Gastrocnemius medialis (tissue), 4 donors: ENCODE measurements at regions of chr15 and their contacts with region 1.

Region 1: DNA sequence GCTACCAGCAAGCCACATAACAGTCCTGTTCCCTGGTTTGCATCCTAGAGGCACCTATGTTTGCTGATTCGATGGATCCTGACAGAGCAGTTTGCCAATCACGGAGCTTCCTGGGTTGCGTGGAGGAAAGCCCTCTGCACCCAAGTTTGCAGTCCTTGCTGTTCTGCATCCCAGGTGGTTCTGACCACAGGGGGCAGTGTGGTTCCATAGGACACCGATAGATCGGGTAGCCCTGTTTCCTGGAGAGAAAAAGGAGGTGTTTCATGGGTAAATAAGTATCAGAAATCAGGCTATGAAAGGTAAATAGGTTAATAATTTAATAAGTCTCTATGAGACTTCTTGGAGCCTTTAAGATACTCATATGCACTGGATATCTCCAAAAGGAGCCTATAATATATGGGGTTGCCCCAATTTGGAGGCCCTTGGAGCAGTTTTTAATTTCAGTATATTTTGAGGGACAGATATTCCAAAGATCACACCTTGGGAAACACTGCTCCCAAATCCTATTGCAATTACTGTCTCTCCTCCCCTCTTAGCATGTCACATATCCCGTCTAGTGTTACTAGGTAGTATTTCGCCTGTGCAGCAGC is 194.6 kb upstream of the TPM1 start:
- DNase-seq: peak in 1 of 2 donors; percentile 44
- ATAC-seq: peak; percentile 66 to 77
- H3K4me3 ChIP-seq: no peak overlapping the region
- H3K27ac ChIP-seq: no peak overlapping the region
- H3K4me1 ChIP-seq: peaks cover 9 to 13% of the 10 kb centered on the region in 2 donors
- H3K27me3 ChIP-seq: no peaks in the 10 kb centered on the region
- CTCF ChIP-seq: peak; percentile 49 to 91 (median 83)
- POLR2A ChIP-seq: no peak

Region 2: DNA sequence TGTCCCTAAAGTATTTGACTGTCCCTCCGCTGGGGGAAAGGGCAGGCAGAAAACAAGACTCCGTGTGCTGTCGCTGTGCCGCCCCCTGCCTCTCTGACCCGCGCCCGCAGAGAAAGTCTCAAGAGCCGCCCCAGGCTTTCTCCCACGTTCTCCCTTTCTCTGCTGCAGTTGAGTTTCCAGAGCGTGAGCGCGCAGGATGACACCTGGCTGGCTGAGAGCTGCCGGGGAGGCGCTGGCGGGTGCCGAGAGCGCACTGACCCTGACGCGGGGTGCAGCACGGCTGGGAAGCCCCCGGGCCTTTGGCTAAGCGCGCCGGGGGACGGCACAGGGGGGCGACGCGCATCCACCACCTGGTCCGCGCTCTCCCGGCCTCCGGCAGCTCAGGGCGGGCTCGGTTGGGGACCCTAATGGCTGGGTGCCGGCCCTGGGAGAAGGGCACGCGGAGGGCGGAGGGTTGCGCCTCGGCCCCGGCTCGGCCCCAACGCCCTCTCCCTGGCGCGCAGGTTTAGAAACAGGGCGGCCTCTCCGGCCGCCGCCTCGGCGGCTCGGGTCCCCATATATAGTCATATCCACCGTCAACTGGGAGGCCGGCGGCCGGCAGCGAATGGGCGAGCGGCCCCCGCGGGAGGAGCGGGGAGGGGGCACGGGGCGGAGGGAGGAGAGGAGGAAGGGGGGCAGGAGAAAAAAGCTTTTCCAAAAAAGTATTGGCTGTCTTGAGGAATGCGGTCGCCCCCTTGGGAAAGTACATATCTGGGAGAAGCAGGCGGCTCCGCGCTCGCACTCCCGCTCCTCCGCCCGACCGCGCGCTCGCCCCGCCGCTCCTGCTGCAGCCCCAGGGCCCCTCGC is 194.2 kb after region 1 on chr15 and contains the start of gene TPM1:
- in situ Hi-C with region 1: no loop called
- intact Hi-C with region 1: loop called (anchors 2 kb)
- DNase-seq: peak; percentile 63 to 83
- ATAC-seq: peak; percentile 70 to 71
- H3K4me3 ChIP-seq: peak within 1 kb of the TSS; percentile 71 to 93 (median 83)
- H3K27ac ChIP-seq: peak within 1 kb of the TSS; percentile 86 to 96 (median 91)
- H3K4me1 ChIP-seq: peaks cover 29 to 37% of the 10 kb centered on the region in 2 donors
- H3K27me3 ChIP-seq: peaks cover 0 to 28% (median 6%) of the 10 kb centered on the region in 3 donors
- CTCF ChIP-seq: peak in 1 of 5 experiments; percentile 24
- POLR2A ChIP-seq: peak; percentile 71 to 76
- total RNA-seq, gene TPM1: 656 to 1,383 (median 909) TPM

Region 3: GRCh38 chr15:63048115-63048775 is 200.2 kb after region 1 on chr15:
- in situ Hi-C with region 1: no loop called
- intact Hi-C with region 1: loop called (anchors 2 kb)
- DNase-seq: peak; percentile 78 to 86
- ATAC-seq: peak; percentile 75 to 78
- H3K4me3 ChIP-seq: peak overlapping the region; percentile 72 to 94 (median 80)
- H3K27ac ChIP-seq: peak overlapping the region; percentile 86 to 96 (median 91)
- H3K4me1 ChIP-seq: peaks cover 70 to 74% of the 10 kb centered on the region in 2 donors
- H3K27me3 ChIP-seq: peaks cover 0 to 19% (median 0%) of the 10 kb centered on the region in 3 donors
- CTCF ChIP-seq: peak; percentile 97 to 99 (median 98)
- POLR2A ChIP-seq: peak; percentile 61 to 74